Caco-2 (cell line): ENCODE measurements at regions of chr15 and their contacts with region 1.

Region 1: GRCh38 chr15:46576646-46577395 is 942.0 kb downstream of the SQOR start:
- DNase-seq: peak; percentile 49 to 70
- H3K4me3 ChIP-seq: no peak overlapping the region
- H3K4me3 Mint-ChIP-seq: peak overlapping the region; percentile 10
- H3K27ac Mint-ChIP-seq: peak overlapping the region; percentile 83
- H3K4me1 ChIP-seq: peaks cover 17% of the 10 kb centered on the region
- H3K4me1 Mint-ChIP-seq: peaks cover 8% of the 10 kb centered on the region
- H3K27me3 ChIP-seq: no peaks in the 10 kb centered on the region
- H3K27me3 Mint-ChIP-seq: no peaks in the 10 kb centered on the region
- CTCF ChIP-seq: no peak

Region 2: DNA sequence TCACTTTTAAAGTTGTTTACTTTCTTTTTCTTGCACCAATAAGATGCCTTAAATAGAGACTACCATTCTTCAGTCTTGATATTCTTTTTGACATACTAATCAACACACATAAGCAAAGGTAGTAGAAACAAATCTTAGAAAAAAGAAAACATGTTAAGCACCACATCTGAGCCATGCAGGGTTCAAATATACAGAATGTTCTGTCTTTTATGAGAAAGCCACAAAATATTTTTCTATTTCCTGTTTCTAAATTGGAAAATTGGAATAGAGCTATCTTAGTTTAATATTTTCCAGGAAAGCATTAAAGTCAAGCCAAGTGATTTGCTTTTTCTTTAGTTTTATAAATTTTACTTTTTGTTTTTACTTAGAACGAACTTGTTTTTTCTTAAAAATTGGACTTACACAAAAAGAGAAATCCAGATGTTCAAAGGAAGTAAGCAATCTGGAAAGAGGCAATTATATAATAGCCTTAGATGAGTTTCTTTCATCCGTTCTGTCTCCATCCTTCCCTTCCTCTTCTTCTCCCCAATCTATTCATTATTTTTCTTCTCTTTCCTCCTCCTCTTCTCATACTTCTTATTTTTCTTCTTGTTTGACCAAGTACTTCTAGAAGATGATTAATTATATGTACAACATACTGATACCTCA is 210.3 kb before region 1 on chr15:
- CTCF ChIA-PET with region 1: no interaction called
- POLR2A ChIA-PET with region 1: no interaction called
- intact Hi-C with region 1: no loop called
- DNase-seq: no peak
- H3K4me3 ChIP-seq: no peak overlapping the region
- H3K4me3 Mint-ChIP-seq: no peak overlapping the region
- H3K27ac Mint-ChIP-seq: no peak overlapping the region
- H3K4me1 ChIP-seq: no peaks in the 10 kb centered on the region
- H3K4me1 Mint-ChIP-seq: no peaks in the 10 kb centered on the region
- H3K27me3 ChIP-seq: no peaks in the 10 kb centered on the region
- H3K27me3 Mint-ChIP-seq: peaks cover 2% of the 10 kb centered on the region
- CTCF ChIP-seq: no peak

Region 3: DNA sequence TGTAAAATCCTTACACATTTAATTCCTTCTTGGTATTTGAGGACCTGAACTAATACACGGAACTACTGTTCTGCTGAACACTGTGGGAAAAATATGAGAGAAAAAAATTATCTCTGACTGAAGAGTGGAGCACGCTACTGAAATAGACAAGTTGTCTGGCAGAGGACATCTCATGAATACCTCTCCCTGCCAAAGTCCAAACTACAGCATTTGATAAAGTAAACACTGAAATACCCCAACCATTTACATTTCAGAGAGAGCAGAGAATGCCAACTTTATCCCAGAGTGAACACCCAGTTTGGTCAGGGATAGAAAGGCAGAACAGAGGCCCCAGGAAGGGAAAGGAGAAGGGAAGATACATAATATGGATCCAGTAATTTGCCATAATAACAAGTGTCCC is 21.3 kb before region 1 on chr15:
- CTCF ChIA-PET with region 1: no interaction called
- POLR2A ChIA-PET with region 1: no interaction called
- intact Hi-C with region 1: loop called (anchors 2 kb)
- DNase-seq: no peak
- H3K4me3 ChIP-seq: no peak overlapping the region
- H3K4me3 Mint-ChIP-seq: no peak overlapping the region
- H3K27ac Mint-ChIP-seq: peak overlapping the region; percentile 34
- H3K4me1 ChIP-seq: no peaks in the 10 kb centered on the region
- H3K4me1 Mint-ChIP-seq: peaks cover 12% of the 10 kb centered on the region
- H3K27me3 ChIP-seq: no peaks in the 10 kb centered on the region
- H3K27me3 Mint-ChIP-seq: no peaks in the 10 kb centered on the region
- CTCF ChIP-seq: no peak

Region 4: DNA sequence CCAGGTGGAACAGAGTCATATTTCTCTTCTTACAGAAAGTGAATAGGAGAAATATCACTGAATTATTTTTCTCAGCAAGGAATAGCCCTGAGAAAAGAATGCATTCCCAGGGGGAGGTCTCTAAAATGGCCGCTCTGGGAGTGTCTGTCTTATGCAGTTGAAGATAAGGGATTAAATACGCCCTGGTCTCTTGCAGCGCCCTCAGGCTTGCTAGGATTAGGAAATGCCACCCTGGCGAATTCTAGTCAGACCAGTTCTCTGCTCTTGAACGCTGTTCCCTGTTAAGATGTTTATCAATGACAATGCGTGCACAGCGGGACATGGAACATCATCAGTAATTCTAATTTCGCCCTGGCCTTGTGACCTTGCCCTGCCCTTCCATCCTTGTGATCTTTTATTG is 191.5 kb after region 1 on chr15:
- CTCF ChIA-PET with region 1: no interaction called
- POLR2A ChIA-PET with region 1: no interaction called
- intact Hi-C with region 1: no loop called
- DNase-seq: peak in 1 of 2 experiments; percentile 16
- H3K4me3 ChIP-seq: no peak overlapping the region
- H3K4me3 Mint-ChIP-seq: no peak overlapping the region
- H3K27ac Mint-ChIP-seq: no peak overlapping the region
- H3K4me1 ChIP-seq: peaks cover 15% of the 10 kb centered on the region
- H3K4me1 Mint-ChIP-seq: no peaks in the 10 kb centered on the region
- H3K27me3 ChIP-seq: no peaks in the 10 kb centered on the region
- H3K27me3 Mint-ChIP-seq: no peaks in the 10 kb centered on the region
- CTCF ChIP-seq: no peak